Activated T-helper 2 cell treated with anti-CD3 and anti-CD28 coated beads, Interferon-gamma antibody, Interleukin-2, Interleukin-4, amounts not matched to agents 10 μg/mL and 5 μg/mL and 100 μg/mL, durations not matched to agents 14 hours and 24 hours and 36 hours (primary cell): ENCODE measurements at regions of chr5 and their contacts with region 1.

Region 1: GRCh38 chr5:145825751-145826180 is 9.4 kb downstream of the PRELID2 start:
- DNase-seq: no peak
- H3K4me3 Mint-ChIP-seq: no peak overlapping the region
- H3K27ac Mint-ChIP-seq: no peak overlapping the region
- H3K4me1 Mint-ChIP-seq: peaks cover 9% of the 10 kb centered on the region
- H3K27me3 Mint-ChIP-seq: peaks cover 8% of the 10 kb centered on the region

Region 2: DNA sequence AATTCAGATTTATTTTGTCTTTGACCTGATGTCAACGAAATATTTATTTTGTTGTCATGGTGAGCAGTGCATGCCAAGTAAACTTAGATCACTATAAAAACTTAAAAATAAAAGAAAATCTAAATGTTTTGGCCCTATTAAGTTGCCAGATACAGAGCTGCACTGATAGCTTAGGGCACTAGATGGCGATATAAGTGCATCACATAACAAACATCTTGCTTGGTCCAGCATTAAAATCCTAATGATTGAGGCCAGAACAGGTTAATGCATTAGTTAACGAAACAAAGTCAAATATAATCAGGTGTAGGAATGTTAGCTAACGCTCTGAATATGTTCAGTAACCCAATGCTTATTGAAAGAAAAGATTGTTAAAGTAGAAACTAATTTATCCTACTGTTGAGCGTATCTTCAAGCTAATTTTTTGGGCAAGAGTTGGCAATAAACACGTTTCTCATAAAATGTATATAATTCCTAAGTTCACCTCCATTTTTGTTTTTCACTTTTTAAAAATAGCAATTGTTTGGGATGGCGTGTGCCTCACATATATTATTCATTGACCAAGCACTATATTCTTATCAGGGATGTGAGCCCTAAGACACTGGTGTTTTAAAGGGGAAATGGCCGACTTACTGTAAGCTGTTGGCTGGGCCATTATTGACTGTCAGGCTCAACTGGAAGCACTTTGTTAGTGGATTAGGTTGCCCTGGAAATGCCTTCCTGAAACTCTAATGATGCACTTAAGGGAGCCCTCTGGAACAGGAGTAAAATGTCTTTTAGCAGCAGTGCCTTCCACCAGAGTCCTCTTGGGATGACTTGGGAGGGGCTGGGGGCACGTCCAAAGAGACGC is 1621.8 kb before region 1 on chr5:
- intact Hi-C with region 1: loop called (anchors 2 kb)
- DNase-seq: no peak
- H3K4me3 Mint-ChIP-seq: no peak overlapping the region
- H3K27ac Mint-ChIP-seq: no peak overlapping the region
- H3K4me1 Mint-ChIP-seq: peaks cover 5% of the 10 kb centered on the region
- H3K27me3 Mint-ChIP-seq: peaks cover 55% of the 10 kb centered on the region

Region 3: GRCh38 chr5:145178641-145179523 is 646.9 kb before region 1 on chr5:
- intact Hi-C with region 1: no loop called
- DNase-seq: no peak
- H3K4me3 Mint-ChIP-seq: no peak overlapping the region
- H3K27ac Mint-ChIP-seq: no peak overlapping the region
- H3K4me1 Mint-ChIP-seq: no peaks in the 10 kb centered on the region
- H3K27me3 Mint-ChIP-seq: no peaks in the 10 kb centered on the region

Region 4: GRCh38 chr5:145681686-145682085 is 144.1 kb before region 1 on chr5:
- intact Hi-C with region 1: loop called (anchors 5 kb)
- DNase-seq: peak; percentile 11
- H3K4me3 Mint-ChIP-seq: no peak overlapping the region
- H3K27ac Mint-ChIP-seq: no peak overlapping the region
- H3K4me1 Mint-ChIP-seq: peaks cover 2% of the 10 kb centered on the region
- H3K27me3 Mint-ChIP-seq: no peaks in the 10 kb centered on the region

Region 5: DNA sequence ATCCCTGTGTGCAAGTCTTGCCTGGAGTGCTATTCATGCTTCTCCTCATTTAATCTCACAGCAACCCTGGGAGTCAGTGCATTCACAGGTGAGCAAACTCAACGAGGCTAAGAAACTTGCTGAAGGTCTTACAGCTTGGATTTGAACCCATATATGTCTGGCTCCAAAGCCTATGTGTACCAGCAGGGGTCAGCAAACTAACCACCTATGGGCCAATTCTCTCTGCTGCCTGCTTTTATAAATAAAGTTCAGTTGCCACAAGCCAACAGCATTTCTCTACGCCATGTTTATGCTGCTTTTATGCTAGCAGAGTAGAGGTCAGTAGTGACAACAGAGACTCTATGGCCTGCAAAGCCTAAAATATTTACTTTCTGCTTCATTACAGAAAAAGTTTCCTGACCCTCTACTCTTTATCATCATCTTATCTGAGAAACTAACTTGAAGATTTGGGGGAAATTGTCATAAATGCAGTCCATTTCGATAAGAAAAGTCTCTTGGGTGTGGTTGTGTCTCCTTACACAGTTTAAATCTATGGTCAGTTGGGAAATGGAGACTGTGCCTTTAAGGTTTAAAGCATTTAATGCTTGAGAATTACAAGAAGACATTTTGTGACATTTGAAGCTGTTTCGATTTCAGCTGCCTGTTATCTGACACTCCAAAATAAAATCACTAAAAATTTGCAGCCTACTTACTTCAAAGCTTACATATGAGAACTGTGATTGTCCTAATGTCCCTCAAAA is 128.3 kb before region 1 on chr5:
- intact Hi-C with region 1: loop called (anchors 1 kb)
- DNase-seq: no peak
- H3K4me3 Mint-ChIP-seq: no peak overlapping the region
- H3K27ac Mint-ChIP-seq: no peak overlapping the region
- H3K4me1 Mint-ChIP-seq: no peaks in the 10 kb centered on the region
- H3K27me3 Mint-ChIP-seq: no peaks in the 10 kb centered on the region

Region 6: GRCh38 chr5:145775893-145776444 is 49.8 kb before region 1 on chr5:
- intact Hi-C with region 1: no loop called
- DNase-seq: no peak
- H3K4me3 Mint-ChIP-seq: no peak overlapping the region
- H3K27ac Mint-ChIP-seq: no peak overlapping the region
- H3K4me1 Mint-ChIP-seq: no peaks in the 10 kb centered on the region
- H3K27me3 Mint-ChIP-seq: no peaks in the 10 kb centered on the region